AG04449 (cell line): ENCODE measurements at regions of chr1 and their contacts with region 1.

Region 1: DNA sequence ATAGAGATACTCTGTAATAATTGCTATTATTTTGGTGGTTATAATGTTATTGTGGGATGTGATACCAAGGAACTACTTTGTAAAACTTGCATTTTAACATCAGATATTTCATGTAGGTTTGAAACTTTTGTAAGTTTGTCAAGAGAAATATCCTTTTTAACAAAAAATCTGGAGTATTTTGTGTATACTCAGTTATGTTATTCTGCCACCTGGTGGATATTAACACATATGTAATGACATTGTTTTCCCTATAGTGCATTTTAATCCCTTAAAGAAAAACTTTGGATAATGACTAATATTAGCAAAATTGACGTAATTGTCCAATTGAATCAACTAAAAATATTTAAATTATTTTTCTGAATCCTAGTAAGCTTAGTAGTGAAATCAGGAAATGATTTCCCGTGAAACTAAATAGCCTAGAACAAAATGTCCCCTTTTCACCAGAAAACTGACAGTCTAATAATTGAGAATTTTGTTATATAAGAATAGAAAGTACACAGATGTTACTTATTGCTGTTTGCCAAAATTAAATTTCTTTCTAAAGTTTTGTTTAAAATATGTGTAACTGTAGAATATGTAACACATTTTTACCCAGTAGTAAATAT is 39.6 kb downstream of the KCTD3 start:
- DNase-seq: no peak
- H3K4me3 ChIP-seq: no peak overlapping the region
- CTCF ChIP-seq: no peak

Region 2: GRCh38 chr1:215590787-215591499 is 15.7 kb before region 1 on chr1:
- CTCF ChIA-PET with region 1: interaction called, 10 read pairs
- POLR2A ChIA-PET with region 1: no interaction called
- DNase-seq: no peak
- H3K4me3 ChIP-seq: no peak overlapping the region
- CTCF ChIP-seq: no peak

Region 3: DNA sequence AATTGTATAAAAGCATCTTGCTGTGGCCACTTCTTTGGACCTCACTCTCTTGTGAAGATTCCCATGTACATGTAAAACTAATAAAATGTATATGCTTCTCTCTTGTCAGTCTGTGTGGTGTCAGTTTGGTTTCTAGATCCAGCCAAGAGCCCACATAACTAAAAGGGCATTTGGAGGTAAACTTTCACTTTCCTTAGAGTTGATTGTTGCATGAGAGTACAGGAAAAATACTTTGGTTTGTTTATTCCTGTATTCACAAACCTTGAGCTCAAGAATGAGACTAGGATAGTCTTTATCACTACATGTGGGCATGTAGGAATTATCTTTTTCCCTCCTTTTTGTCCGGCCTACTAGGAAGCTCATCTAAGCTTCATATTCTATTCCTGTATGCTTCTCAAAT is 11.3 kb after region 1 on chr1:
- CTCF ChIA-PET with region 1: interaction called, 37 read pairs
- POLR2A ChIA-PET with region 1: no interaction called
- DNase-seq: no peak
- H3K4me3 ChIP-seq: no peak overlapping the region
- CTCF ChIP-seq: no peak